HAP-1 (cell line): ENCODE measurements at regions of chr1 and their contacts with region 1.

Region 1: DNA sequence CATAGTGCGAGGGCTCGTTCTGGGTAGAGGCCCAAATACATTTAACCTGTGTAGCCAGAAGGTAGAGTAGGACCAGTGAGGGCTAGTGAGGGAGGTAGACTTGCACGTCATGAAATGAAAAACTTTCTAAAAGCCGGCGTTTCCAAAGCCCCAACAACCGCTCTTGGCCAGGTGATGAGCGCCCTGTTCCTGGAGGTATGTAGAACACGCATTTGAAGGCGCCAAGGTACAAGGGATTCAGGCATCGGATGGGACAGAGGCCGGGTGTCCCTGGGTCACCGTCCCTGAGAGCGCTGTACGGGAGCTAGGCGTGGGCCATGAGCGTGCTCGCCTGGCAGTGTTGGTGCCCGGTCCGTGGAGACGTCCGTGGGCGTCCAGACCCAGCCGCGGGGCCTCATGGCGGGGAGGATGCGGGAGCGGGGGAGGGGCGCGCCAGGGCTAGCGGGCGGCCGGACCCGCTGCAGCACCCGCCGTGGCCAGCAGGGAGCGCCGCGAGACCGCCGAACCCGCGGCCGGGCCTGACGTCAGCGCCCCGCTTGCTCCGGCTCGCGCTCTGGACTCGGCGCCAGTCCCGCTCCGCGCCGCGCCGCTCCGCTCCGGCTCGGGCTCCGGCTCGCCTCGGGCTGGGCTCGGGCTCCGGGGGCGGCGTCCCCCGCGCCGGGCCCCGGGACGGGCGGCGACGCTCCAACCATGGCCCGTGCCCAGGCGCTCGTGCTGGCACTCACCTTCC is at the start of gene PTPRU:
- DNase-seq: peak; percentile 47 to 87
- H3K4me3 ChIP-seq: peak within 1 kb of the TSS; percentile 86
- H3K4me1 ChIP-seq: peaks cover 21% of the 10 kb centered on the region
- H3K27me3 ChIP-seq: no peaks in the 10 kb centered on the region

Region 2: DNA sequence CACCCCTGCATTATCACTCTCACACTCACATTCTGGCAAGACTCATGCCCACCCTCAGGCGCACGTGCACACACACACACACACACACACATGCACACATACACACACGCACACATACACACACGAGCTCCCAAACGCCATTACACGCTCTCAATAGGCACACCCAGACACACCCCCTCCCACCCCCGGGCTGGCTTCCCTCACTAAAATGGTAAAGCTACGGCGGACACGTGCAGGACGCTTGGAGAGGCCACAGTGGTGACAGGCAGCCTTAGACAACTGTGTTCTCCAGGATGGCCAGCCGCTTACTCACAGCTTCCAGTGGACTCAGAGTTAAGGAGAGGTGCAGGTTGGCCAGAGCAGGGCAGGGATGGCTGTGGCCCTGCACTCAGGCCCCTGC is 1477.2 kb after region 1 on chr1:
- in situ Hi-C with region 1: loop called (anchors 5 kb)
- DNase-seq: no peak
- H3K4me3 ChIP-seq: no peak overlapping the region
- H3K4me1 ChIP-seq: no peaks in the 10 kb centered on the region
- H3K27me3 ChIP-seq: 0 out of 2 replicates have a peak, but pooled peaks cover 3% of the 10 kb centered on the region